ENCODE measurements at regions of chr20 and their contacts with region 1.

Region 1: DNA sequence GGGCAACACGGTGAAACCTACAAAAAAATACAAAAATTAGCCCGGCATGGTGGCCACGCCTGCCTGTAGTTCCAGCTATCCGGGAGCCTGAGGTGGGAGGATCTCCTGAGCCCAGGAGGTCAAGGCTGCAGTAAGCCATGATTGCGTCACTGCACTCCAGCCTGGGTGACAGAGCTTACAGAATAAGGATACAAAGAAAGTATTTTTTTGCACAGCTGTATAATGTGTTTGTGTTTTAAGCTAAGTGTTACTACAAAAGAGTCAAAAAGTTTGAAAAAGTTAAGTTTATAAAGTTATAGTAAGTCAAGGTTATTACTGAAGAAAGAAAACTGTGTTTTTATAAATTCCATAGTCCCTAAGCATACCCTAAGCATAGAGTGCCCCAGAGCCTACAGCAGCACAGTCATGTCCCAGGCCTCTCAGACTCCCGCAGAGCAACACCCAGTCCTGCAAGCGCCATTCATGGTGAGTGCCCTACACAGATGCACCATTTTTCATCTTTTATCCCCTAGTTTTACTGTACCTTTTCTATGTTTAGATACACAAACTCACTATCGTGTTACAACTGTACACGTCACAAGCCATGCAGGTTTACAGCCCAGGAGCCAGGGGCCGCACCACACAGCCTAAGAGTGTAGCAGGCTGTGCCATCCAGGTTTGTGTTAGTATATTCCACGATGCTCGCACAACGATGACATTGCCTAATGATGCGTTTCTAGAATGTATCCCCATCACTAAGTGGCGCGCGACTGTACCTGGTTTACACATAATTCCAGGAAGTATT is 22.4 kb downstream of the TAF4 start:
- DNase-seq: peak; percentile 6
- H3K4me3 ChIP-seq: no peak overlapping the region
- H3K27ac ChIP-seq: no peak overlapping the region
- H3K4me1 ChIP-seq: peaks cover 3% of the 10 kb centered on the region
- H3K27me3 ChIP-seq: no peaks in the 10 kb centered on the region
- CTCF ChIP-seq: no peak

Region 2: GRCh38 chr20:61951695-61952533 is 91.4 kb before region 1 on chr20:
- CTCF ChIA-PET with region 1: no interaction called
- dilution Hi-C with region 1: loop called (anchors 5 kb)
- in situ Hi-C with region 1: no loop called
- intact Hi-C with region 1: no loop called
- DNase-seq: no peak
- H3K4me3 ChIP-seq: no peak overlapping the region
- H3K27ac ChIP-seq: no peak overlapping the region
- H3K4me1 ChIP-seq: no peaks in the 10 kb centered on the region
- H3K27me3 ChIP-seq: no peaks in the 10 kb centered on the region
- CTCF ChIP-seq: no peak

Region 3: GRCh38 chr20:62002882-62003480 is 40.3 kb before region 1 on chr20:
- CTCF ChIA-PET with region 1: no interaction called
- dilution Hi-C with region 1: loop called (anchors 5 kb)
- in situ Hi-C with region 1: no loop called
- intact Hi-C with region 1: no loop called
- DNase-seq: no peak
- H3K4me3 ChIP-seq: no peak overlapping the region
- H3K27ac ChIP-seq: no peak overlapping the region
- H3K4me1 ChIP-seq: peaks cover 16% of the 10 kb centered on the region
- H3K27me3 ChIP-seq: no peaks in the 10 kb centered on the region
- CTCF ChIP-seq: no peak